ENCODE measurements at regions of chr10 and their contacts with region 1.

Region 1: GRCh38 chr10:70267161-70267933 is 16.5 kb downstream of the NPFFR1 start:
- DNase-seq: peak; percentile 41 to 45
- H3K4me3 ChIP-seq: no peak overlapping the region
- H3K4me3 Mint-ChIP-seq: no peak overlapping the region
- H3K27ac Mint-ChIP-seq: no peak overlapping the region
- H3K4me1 ChIP-seq: no peaks in the 10 kb centered on the region; the same call in 1 of the 2 replicates
- H3K4me1 Mint-ChIP-seq: peaks cover 6% of the 10 kb centered on the region
- H3K27me3 ChIP-seq: no peaks in the 10 kb centered on the region; the same call in 1 of the 2 replicates
- H3K27me3 Mint-ChIP-seq: no peaks in the 10 kb centered on the region
- CTCF ChIP-seq: no peak

Region 2: GRCh38 chr10:70115948-70116682 is 151.2 kb before region 1 on chr10:
- CTCF ChIA-PET with region 1: interaction called, 10 read pairs
- POLR2A ChIA-PET with region 1: no interaction called
- intact Hi-C with region 1: no loop called
- DNase-seq: peak; percentile 76 to 87
- H3K4me3 ChIP-seq: no peak overlapping the region
- H3K4me3 Mint-ChIP-seq: no peak overlapping the region
- H3K27ac Mint-ChIP-seq: peak overlapping the region; percentile 7
- H3K4me1 ChIP-seq: no peaks in the 10 kb centered on the region
- H3K4me1 Mint-ChIP-seq: no peaks in the 10 kb centered on the region
- H3K27me3 ChIP-seq: no peaks in the 10 kb centered on the region
- H3K27me3 Mint-ChIP-seq: no peaks in the 10 kb centered on the region
- CTCF ChIP-seq: peak; percentile 97 to 99

Region 3: DNA sequence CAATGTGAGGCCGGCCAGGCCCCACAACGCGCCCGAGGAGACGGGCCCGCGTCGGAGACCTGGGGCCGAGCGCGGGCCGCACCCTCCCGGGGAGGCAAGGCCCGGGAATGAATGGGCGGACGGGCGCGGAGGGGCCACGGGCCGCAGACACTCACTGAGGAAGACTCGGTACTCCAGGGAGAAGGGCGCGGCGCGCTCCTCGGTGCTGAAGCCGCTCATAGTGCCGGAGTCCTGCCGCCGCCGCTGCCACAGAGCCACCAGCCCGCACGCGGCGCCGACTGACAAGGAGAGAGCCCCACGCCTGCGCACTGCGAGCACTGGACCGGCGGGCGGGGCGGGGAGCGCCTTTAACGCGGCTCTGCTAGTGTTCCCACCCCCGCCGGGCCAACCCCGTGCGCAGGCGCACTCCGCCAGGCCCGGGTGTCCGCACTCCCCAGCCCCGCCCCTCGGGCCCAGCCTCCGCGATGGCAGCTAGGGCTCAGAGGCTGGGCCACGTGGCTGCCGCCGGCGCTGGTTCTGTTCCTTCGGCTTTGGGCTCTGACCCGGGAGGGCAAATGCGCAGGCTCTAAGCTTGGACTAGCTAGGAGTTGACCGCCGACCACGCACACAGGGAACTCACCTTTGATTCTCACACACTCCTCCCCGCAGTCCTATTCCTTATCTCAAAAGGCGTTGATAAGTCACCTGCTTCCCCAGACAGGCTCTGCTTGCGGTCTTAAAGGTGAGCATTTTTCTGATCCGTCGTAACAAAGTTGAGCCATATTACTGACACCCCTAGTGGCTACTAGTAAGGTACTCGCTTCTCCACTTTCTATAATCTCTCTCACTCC is 34.0 kb before region 1 on chr10 and contains the start of gene PPA1:
- CTCF ChIA-PET with region 1: interaction called, 49 read pairs
- POLR2A ChIA-PET with region 1: interaction called, 21 read pairs
- intact Hi-C with region 1: loop called (anchors 2 kb)
- DNase-seq: peak; percentile 99 to 100
- H3K4me3 ChIP-seq: peak within 1 kb of the TSS; percentile 85
- H3K4me3 Mint-ChIP-seq: peak within 1 kb of the TSS; percentile 76
- H3K27ac Mint-ChIP-seq: peak within 1 kb of the TSS; percentile 99
- H3K4me1 ChIP-seq: peaks cover 19% of the 10 kb centered on the region
- H3K4me1 Mint-ChIP-seq: peaks cover 19% of the 10 kb centered on the region
- H3K27me3 ChIP-seq: no peaks in the 10 kb centered on the region
- H3K27me3 Mint-ChIP-seq: no peaks in the 10 kb centered on the region
- CTCF ChIP-seq: peak; percentile 56 to 81
- total RNA-seq, gene PPA1: 350 and 353 TPM in 2 replicates

Region 4: GRCh38 chr10:70296406-70296899 is 29.1 kb after region 1 on chr10:
- CTCF ChIA-PET with region 1: interaction called, 10 read pairs
- POLR2A ChIA-PET with region 1: no interaction called
- intact Hi-C with region 1: no loop called
- DNase-seq: no peak
- H3K4me3 ChIP-seq: no peak overlapping the region
- H3K4me3 Mint-ChIP-seq: no peak overlapping the region
- H3K27ac Mint-ChIP-seq: no peak overlapping the region
- H3K4me1 ChIP-seq: no peaks in the 10 kb centered on the region
- H3K4me1 Mint-ChIP-seq: no peaks in the 10 kb centered on the region
- H3K27me3 ChIP-seq: no peaks in the 10 kb centered on the region
- H3K27me3 Mint-ChIP-seq: no peaks in the 10 kb centered on the region
- CTCF ChIP-seq: no peak

Region 5: GRCh38 chr10:70348228-70348850 is 81.0 kb after region 1 on chr10:
- CTCF ChIA-PET with region 1: interaction called, 23 read pairs
- POLR2A ChIA-PET with region 1: no interaction called
- intact Hi-C with region 1: loop called (anchors 2 kb)
- DNase-seq: peak in 1 of 2 experiments; percentile 68
- H3K4me3 ChIP-seq: no peak overlapping the region
- H3K4me3 Mint-ChIP-seq: no peak overlapping the region
- H3K27ac Mint-ChIP-seq: no peak overlapping the region
- H3K4me1 ChIP-seq: peaks cover 33% of the 10 kb centered on the region
- H3K4me1 Mint-ChIP-seq: peaks cover 18% of the 10 kb centered on the region
- H3K27me3 ChIP-seq: no peaks in the 10 kb centered on the region
- H3K27me3 Mint-ChIP-seq: no peaks in the 10 kb centered on the region
- CTCF ChIP-seq: peak; percentile 69 to 70

Region 6: GRCh38 chr10:70374775-70375614 is 107.6 kb after region 1 on chr10:
- CTCF ChIA-PET with region 1: interaction called, 12 read pairs
- POLR2A ChIA-PET with region 1: no interaction called
- intact Hi-C with region 1: no loop called
- DNase-seq: peak; percentile 32 to 36
- H3K4me3 ChIP-seq: no peak overlapping the region
- H3K4me3 Mint-ChIP-seq: no peak overlapping the region
- H3K27ac Mint-ChIP-seq: peak overlapping the region; percentile 40
- H3K4me1 ChIP-seq: peaks cover 39% of the 10 kb centered on the region
- H3K4me1 Mint-ChIP-seq: peaks cover 22% of the 10 kb centered on the region
- H3K27me3 ChIP-seq: no peaks in the 10 kb centered on the region
- H3K27me3 Mint-ChIP-seq: no peaks in the 10 kb centered on the region
- CTCF ChIP-seq: no peak

Region 7: GRCh38 chr10:70404036-70404786 is 136.9 kb after region 1 on chr10 and contains the start of gene EIF4EBP2:
- CTCF ChIA-PET with region 1: interaction called, 11 read pairs
- POLR2A ChIA-PET with region 1: no interaction called
- intact Hi-C with region 1: no loop called
- DNase-seq: peak; percentile 99 to 100
- H3K4me3 ChIP-seq: peak within 1 kb of the TSS; percentile 99
- H3K4me3 Mint-ChIP-seq: peak within 1 kb of the TSS; percentile 95
- H3K27ac Mint-ChIP-seq: peak within 1 kb of the TSS; percentile 91
- H3K4me1 ChIP-seq: peaks cover 15% of the 10 kb centered on the region
- H3K4me1 Mint-ChIP-seq: peaks cover 47% of the 10 kb centered on the region
- H3K27me3 ChIP-seq: no peaks in the 10 kb centered on the region
- H3K27me3 Mint-ChIP-seq: no peaks in the 10 kb centered on the region
- CTCF ChIP-seq: no peak
- total RNA-seq, gene EIF4EBP2: 166 and 168 TPM in 2 replicates